A673 (cell line): ENCODE measurements at regions of chr7 and their contacts with region 1.

Region 1: DNA sequence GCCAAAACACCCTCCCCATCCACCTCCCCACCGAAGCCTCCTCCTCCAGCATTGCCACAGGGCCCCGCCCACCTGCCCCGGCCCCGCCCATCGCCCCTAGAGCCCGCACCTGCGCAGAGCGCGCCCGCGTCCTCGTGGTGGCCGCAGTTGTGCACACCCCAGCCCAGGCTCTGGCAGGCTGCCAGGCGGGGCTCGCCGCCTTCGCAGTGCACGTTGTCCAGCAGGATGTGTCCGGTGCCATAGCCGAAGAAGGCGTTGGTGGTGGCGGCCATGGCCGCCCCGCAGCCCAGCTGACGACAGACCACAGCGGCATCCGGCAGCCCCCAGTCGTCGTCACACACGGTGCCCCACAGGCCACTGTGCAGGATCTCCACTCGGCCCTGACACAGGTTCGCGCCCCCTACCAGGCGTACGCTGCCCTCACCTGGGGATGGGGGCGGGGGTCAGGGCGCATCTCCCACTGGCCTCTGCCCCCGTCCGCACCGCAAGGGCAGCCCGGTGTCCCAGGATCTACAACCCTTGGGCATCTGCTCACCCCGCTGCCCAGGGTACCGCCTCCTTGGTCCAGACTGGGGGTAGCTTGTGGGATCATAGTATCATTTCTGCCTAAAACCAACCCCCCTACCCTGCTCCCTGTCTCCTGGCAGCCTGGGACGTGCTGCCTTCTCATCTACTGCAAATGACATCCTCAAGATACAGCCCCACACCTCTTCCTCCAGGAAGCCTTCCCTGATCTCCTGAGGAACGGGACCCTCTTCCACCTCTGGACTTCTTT is 11.9 kb downstream of the SSC4D start:
- DNase-seq: peak; percentile 79
- H3K4me3 ChIP-seq: peak overlapping the region; percentile 48
- H3K27ac ChIP-seq: no peak overlapping the region
- H3K4me1 ChIP-seq: peaks cover 21% of the 10 kb centered on the region
- H3K27me3 ChIP-seq: no peaks in the 10 kb centered on the region
- CTCF ChIP-seq: no peak

Region 2: DNA sequence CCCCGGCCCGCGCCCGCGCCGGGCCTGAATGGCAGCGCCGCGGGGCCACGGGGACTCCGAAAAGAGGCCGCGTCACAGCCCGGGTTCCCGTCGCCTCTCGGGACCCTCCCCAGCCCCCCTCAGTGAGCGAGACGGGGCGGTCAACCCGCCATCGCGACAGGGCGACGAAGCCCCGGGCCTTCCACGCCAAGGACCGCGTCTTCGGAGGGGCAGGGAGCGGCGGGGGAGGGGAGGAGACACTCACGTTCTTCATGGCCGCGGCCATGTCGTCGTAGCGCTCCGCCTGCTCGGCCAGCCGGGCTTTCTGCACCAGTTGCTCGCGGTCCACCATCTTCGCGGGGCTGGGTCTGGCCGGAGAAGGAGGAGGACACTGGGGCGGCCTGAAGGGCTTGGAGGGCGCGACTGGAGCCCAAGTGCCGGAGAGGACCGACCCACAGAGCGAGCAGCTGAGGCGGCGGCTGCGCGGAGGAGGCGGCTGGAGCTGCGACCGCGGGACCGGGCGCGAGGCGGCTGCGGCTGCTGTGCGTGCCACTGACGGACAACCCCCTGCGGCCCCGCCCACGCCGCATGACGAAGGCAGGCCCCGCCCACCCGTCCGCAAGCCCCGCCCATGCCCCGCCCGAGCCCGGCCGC is 39.0 kb before region 1 on chr7 and contains the start of gene YWHAG:
- CTCF ChIA-PET with region 1: no interaction called
- POLR2A ChIA-PET with region 1: interaction called, 26 read pairs
- intact Hi-C with region 1: no loop called
- DNase-seq: peak; percentile 87
- H3K4me3 ChIP-seq: peak within 1 kb of the TSS; percentile 100
- H3K27ac ChIP-seq: peak within 1 kb of the TSS; percentile 98
- H3K4me1 ChIP-seq: peaks cover 21% of the 10 kb centered on the region
- H3K27me3 ChIP-seq: no peaks in the 10 kb centered on the region
- CTCF ChIP-seq: no peak
- total RNA-seq, gene YWHAG: 222 and 249 TPM in 2 replicates